Activated CD4-positive, alpha-beta T cell treated with anti-CD3 and anti-CD28 coated beads for 36 hours (primary cell): ENCODE measurements at regions of chr6 and their contacts with region 1.

Region 1: DNA sequence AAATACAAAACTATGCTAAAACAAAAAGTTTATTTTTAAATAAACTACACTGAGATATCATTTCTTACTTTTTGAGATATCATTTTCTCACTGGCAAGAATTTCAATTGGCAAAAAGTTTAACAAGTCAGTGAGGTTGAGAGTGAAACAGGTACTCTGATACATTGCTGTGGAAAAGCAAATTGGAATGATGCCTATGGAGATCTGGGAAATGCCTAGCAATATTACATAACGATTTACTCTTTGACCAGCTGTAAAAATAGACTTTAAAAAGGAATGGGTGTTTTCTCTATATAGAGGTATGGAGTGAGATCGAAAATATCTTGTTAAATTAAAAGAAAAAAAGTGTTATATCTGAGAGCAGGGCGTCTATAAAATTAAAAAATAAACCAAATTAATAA is 16.9 kb downstream of the CGAS start:
- DNase-seq: no peak
- ATAC-seq: no peak
- H3K4me3 Mint-ChIP-seq: no peak overlapping the region
- H3K27ac Mint-ChIP-seq: no peak overlapping the region
- H3K4me1 Mint-ChIP-seq: peaks cover 3% of the 10 kb centered on the region
- H3K27me3 Mint-ChIP-seq: no peaks in the 10 kb centered on the region

Region 2: GRCh38 chr6:73481969-73482368 is 46.7 kb after region 1 on chr6:
- CTCF ChIA-PET with region 1: interaction called, 4 read pairs
- POLR2A ChIA-PET with region 1: no interaction called
- intact Hi-C with region 1: loop called in 1 of 2 experiments (anchors 2 kb)
- DNase-seq: no peak
- ATAC-seq: no peak
- H3K4me3 Mint-ChIP-seq: no peak overlapping the region
- H3K27ac Mint-ChIP-seq: no peak overlapping the region
- H3K4me1 Mint-ChIP-seq: no peaks in the 10 kb centered on the region
- H3K27me3 Mint-ChIP-seq: no peaks in the 10 kb centered on the region

Region 3: GRCh38 chr6:73528897-73529296 is 93.7 kb after region 1 on chr6:
- CTCF ChIA-PET with region 1: no interaction called
- POLR2A ChIA-PET with region 1: interaction called, 10 read pairs
- intact Hi-C with region 1: no loop called
- DNase-seq: no peak
- ATAC-seq: no peak
- H3K4me3 Mint-ChIP-seq: no peak overlapping the region
- H3K27ac Mint-ChIP-seq: no peak overlapping the region
- H3K4me1 Mint-ChIP-seq: peaks cover 6% of the 10 kb centered on the region
- H3K27me3 Mint-ChIP-seq: no peaks in the 10 kb centered on the region

Region 4: GRCh38 chr6:73923905-73924485 is 488.8 kb after region 1 on chr6:
- CTCF ChIA-PET with region 1: no interaction called
- POLR2A ChIA-PET with region 1: no interaction called
- intact Hi-C with region 1: no loop called
- DNase-seq: no peak
- ATAC-seq: no peak
- H3K4me3 Mint-ChIP-seq: no peak overlapping the region
- H3K27ac Mint-ChIP-seq: no peak overlapping the region
- H3K4me1 Mint-ChIP-seq: no peaks in the 10 kb centered on the region
- H3K27me3 Mint-ChIP-seq: no peaks in the 10 kb centered on the region